ENCODE measurements at regions of chr16 and their contacts with region 1.

Region 1: DNA sequence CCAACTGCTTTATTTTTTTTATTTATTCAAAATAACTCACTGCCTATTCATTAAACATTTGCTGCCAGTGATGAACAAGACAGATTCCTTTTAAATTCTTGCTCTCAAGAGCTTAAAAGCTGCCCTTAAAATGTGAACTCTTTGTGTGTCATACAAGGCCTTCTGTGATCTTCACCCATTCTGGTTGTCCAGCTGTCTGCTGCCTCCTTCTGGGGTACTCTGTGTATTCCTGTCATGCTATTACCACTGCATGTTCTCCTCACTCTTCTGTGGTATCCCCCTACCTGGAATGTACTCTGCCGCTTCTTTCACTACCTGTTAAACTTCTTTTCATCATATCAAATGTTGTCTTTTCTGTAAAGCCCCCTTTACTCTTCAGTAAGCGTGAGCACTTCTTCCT is 165.8 kb downstream of the CHD9 start:
- DNase-seq: no peak
- H3K4me3 ChIP-seq: no peak overlapping the region
- H3K27ac ChIP-seq: no peak overlapping the region
- H3K4me1 ChIP-seq: peaks cover 0 to 14% of the 10 kb centered on the region in 2 donors
- H3K27me3 ChIP-seq: no peaks in the 10 kb centered on the region
- CTCF ChIP-seq: no peak
- POLR2A ChIP-seq: no peak

Region 2: DNA sequence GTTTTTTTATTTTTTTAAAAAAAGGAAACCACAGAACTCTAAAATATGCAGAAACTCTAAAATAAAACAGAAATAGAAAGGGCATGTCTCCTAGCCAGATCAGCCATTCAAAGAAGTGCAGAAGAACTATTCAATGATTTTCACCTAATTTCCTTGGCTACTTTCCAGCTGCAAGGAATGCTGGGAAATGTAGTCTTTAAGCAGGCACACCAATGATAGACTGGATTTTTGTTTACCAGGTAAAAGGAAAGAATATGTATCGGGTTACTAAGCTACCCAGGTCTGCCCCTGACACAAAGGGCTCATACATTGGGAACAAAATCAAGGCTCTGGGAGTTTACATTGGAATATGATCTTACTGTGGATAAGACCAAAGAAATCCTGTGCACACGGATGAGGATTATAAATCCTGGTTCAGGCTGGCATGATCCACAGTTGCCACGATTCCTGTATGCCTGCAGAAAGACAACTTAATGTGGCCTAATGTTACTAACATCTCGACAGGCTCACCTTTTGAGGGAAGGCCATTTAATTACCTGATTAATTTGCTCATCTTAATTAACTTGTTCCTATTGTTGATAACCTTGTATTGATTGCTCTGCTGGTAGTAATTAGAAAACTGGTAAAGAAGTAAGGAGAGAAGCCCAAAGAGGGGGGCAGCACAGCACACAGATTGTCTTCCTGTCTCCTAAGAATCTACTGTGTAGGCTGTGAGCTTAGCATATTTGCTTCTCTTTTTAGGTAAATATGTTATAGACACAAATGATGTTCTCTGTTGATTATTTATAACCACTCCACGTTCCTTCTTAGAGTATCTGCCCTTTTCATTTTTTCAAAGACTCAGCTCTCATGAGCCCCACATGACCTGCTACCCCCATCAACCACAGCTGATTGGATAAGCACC is 622.8 kb before region 1 on chr16:
- intact Hi-C with region 1: no loop called
- DNase-seq: no peak
- H3K4me3 ChIP-seq: no peak overlapping the region
- H3K27ac ChIP-seq: peak overlapping the region in 1 of 2 donors; percentile 23
- H3K4me1 ChIP-seq: no peaks in the 10 kb centered on the region
- H3K27me3 ChIP-seq: no peaks in the 10 kb centered on the region
- CTCF ChIP-seq: no peak
- POLR2A ChIP-seq: no peak

Region 3: DNA sequence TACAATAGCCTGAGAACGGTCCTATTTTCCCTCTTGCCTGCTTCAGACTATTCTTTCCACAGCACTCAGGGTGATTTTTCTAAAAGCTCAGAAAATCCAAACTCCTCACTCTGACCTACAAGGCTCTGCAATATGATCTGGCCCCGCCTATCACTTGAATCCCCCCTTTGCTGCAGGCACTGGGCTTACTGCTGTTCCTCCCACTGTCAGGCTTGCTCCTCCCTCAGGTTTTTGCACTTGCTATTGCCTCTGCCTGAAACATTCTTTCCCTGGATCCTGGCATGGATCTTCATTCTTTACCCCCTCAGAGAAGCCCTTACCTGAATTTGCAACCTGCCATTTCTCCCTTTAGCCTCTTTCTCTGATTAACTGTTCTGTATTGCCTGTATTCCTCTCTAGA is 430.8 kb after region 1 on chr16:
- intact Hi-C with region 1: loop called (anchors 10 kb)
- DNase-seq: no peak
- H3K4me3 ChIP-seq: no peak overlapping the region
- H3K27ac ChIP-seq: no peak overlapping the region
- H3K4me1 ChIP-seq: no peaks in the 10 kb centered on the region
- H3K27me3 ChIP-seq: no peaks in the 10 kb centered on the region
- CTCF ChIP-seq: no peak
- POLR2A ChIP-seq: no peak

Measured in breast epithelium (tissue), 4 donors.